CD8-positive, alpha-beta T cell (primary cell): ENCODE measurements at regions of chr14 and their contacts with region 1.

Region 1: DNA sequence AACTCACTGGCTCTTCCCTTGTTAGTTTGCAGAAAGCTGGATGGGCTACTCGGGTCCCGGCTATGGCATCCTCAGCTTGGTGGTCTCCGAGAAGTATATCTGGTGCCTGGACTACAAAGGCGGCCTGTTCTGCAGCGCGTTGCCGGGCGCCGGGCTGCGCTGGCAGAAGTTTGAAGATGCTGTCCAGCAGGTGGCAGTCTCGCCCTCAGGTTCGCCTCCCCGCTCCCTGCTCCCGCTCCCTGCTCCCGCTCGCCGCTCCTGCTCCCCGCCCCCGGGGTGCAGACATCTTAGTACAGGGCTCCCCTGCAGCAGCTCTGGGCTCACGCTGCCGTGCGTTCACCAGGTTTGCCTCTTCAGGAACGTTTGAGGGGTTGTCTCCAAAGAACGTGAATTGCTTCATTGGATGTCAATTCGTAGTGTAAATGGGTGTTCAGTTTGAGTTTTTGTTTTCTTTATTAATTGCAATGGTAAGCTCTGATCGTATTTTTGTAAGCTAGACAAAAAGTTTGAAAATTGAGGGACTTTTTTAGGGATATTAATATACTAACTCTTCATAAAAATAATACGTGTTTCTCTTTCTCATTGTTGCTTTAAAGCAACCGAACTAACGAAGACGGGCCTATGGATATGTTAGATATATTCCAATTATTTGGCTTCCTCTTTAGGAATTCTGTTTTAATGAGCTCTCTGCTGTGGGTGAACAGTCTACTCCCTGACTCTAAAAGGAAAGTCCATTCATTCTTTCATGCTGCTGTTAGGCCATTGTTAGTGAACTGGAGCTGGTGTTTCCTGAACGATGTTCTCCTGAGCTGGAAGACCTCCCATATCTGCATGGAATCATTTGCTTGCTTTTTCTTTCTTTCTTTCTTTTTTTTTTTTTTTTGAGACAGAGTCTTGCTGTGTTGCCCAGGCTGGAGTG is 71.3 kb downstream of the ANKRD9 start:
- DNase-seq: peak; percentile 8 to 84 (median 61)
- ATAC-seq: peak; percentile 48
- H3K4me3 ChIP-seq: no peak overlapping the region
- H3K4me3 Mint-ChIP-seq: no peak overlapping the region
- H3K27ac ChIP-seq: no peak overlapping the region
- H3K27ac Mint-ChIP-seq: no peak overlapping the region
- H3K4me1 ChIP-seq: peaks cover 3% of the 10 kb centered on the region
- H3K4me1 Mint-ChIP-seq: peaks cover 2% of the 10 kb centered on the region
- H3K27me3 ChIP-seq: no peaks in the 10 kb centered on the region
- H3K27me3 Mint-ChIP-seq: no peaks in the 10 kb centered on the region
- CTCF ChIP-seq: peak; percentile 74

Region 2: DNA sequence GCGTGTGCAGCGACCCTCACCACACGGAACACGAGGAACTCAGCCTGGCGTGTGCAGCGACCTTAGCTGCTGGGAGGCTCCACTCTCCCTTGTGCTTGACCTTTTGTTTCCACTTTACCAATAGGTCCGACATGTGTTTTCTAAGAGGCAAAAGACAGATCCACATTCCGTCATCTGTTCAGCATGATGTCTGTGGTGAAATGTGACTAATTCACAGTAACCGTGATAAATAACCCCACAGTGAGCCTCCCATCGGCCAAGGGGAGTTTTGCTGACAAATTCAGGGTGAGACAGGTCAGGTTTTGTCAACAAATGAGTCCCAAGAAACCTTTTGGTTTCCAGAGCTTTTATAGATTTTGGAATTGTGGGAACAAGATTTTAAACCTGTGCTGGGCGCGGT is 189.2 kb before region 1 on chr14:
- CTCF ChIA-PET with region 1: no interaction called
- POLR2A ChIA-PET with region 1: no interaction called
- intact Hi-C with region 1: no loop called
- DNase-seq: no peak
- ATAC-seq: no peak
- H3K4me3 ChIP-seq: no peak overlapping the region
- H3K4me3 Mint-ChIP-seq: no peak overlapping the region
- H3K27ac ChIP-seq: no peak overlapping the region
- H3K27ac Mint-ChIP-seq: no peak overlapping the region
- H3K4me1 ChIP-seq: no peaks in the 10 kb centered on the region
- H3K4me1 Mint-ChIP-seq: no peaks in the 10 kb centered on the region
- H3K27me3 ChIP-seq: no peaks in the 10 kb centered on the region
- H3K27me3 Mint-ChIP-seq: no peaks in the 10 kb centered on the region
- CTCF ChIP-seq: no peak

Region 3: DNA sequence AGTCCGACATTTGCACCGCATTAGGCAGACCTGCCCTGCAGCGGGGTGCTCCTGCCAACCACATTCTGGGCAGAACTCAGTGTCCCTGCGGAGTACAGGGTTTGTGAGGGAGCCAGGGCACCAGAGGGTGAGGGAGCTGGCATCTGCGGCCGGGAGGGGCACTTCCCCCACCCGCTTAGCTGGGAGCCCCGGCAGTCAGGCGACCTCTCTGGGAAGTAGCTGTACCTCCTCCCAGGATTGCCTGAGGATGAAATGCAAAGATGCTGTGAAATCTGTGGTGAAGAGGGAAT is 12.8 kb after region 1 on chr14:
- CTCF ChIA-PET with region 1: interaction called, 19 read pairs
- POLR2A ChIA-PET with region 1: no interaction called
- intact Hi-C with region 1: no loop called
- DNase-seq: no peak
- ATAC-seq: no peak
- H3K4me3 ChIP-seq: no peak overlapping the region
- H3K4me3 Mint-ChIP-seq: no peak overlapping the region
- H3K27ac ChIP-seq: no peak overlapping the region
- H3K27ac Mint-ChIP-seq: no peak overlapping the region
- H3K4me1 ChIP-seq: no peaks in the 10 kb centered on the region
- H3K4me1 Mint-ChIP-seq: no peaks in the 10 kb centered on the region
- H3K27me3 ChIP-seq: no peaks in the 10 kb centered on the region
- H3K27me3 Mint-ChIP-seq: no peaks in the 10 kb centered on the region
- CTCF ChIP-seq: no peak

Region 4: DNA sequence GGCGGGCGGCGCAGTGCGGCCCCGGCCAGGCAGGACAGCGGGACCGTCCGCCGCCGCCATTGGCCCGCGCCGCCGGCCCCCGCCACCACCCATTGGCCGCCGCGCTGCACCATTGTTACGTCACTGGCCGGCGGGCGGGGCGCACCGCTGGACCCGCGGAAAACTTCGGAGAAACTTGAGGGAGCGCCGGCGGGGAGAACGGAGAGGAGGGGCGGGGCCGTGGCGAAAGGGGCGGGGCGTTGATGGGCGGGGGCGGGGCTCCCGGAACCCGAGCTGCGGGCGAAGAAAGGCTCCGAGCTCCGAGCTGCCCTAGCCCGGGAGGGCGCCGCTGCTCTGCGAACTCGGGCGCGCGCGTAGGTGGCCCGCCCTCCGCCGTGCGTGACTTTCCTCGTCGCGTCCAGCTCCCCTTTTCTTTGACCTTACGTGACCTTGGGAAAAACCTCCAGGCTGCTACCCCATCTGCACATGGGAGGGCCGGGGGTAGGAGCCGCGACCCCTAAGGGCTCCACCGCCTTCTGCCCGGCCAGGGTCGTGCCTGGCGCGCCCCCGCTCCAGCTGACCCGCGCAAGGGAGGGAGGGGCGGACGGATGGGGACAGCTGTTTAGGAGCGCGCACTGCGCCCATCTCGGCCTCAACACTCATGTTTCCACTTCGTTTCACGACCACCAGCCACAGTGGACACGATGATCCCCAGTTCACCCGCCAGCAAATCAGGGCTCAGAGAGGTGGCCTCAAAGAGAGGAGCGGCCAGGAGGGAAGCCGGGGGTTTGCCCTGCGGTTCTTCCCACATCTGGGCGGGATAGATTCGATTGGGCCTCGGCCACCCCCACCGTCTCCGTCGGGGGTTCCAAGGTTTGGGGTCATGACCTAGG is 71.7 kb after region 1 on chr14 and contains the start of gene ANKRD9:
- CTCF ChIA-PET with region 1: interaction called, 74 read pairs
- POLR2A ChIA-PET with region 1: no interaction called
- intact Hi-C with region 1: no loop called
- DNase-seq: peak; percentile 57 to 91 (median 83)
- ATAC-seq: peak; percentile 86
- H3K4me3 ChIP-seq: peak within 1 kb of the TSS; percentile 78 to 96
- H3K4me3 Mint-ChIP-seq: peak within 1 kb of the TSS; percentile 86
- H3K27ac ChIP-seq: peak within 1 kb of the TSS; percentile 48 to 50
- H3K27ac Mint-ChIP-seq: peak within 1 kb of the TSS; percentile 64
- H3K4me1 ChIP-seq: peaks cover 16% of the 10 kb centered on the region
- H3K4me1 Mint-ChIP-seq: peaks cover 9% of the 10 kb centered on the region
- H3K27me3 ChIP-seq: no peaks in the 10 kb centered on the region
- H3K27me3 Mint-ChIP-seq: no peaks in the 10 kb centered on the region
- CTCF ChIP-seq: no peak
- total RNA-seq, gene ANKRD9: 4.7 to 5.0 TPM

Region 5: DNA sequence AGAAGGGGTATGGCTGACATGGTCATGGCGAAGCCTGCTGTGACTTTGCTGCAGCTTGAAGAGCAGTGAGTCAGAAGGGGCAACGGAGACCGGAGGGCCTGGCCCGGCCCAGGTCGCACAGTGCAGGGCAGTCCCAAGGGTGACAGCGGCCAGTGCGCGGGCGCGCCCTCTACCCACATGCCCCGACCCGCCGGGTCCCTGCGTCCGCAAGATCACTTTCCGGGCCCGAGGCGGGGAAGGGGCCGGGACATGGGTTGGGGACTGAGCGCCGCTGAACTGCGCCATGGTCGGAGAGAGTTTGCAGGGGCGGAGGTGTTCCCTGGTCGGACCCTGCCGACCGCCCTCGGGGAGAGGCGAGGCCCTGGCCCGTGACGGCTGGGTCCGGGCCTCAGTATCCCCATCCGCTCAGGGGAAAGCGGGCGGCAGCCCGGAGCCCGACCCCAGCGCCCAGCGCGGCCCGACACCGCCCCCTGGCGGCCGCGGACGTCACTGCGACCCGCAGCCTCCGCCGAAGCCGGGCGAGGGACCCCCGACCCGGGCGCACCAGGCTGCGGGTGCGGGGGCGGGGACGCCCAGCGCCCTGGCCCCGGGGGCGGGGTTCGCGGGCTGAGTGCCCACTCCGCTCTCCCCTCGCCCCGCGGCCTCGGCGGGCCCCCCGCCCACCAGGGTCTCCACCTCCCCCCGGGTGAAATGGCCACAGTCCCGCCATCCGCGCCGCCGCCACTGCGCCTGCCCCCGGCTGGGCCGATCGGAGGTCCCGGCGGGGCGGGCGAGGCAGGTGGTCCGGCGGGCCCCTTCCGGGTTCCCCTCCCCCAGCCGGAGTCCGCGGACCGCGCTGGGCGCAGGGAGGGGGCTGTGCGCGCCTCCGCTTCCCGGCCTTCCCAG is 78.5 kb after region 1 on chr14:
- CTCF ChIA-PET with region 1: interaction called, 74 read pairs
- POLR2A ChIA-PET with region 1: interaction called, 4 read pairs
- intact Hi-C with region 1: loop called in 1 of 2 experiments (anchors 1 kb)
- DNase-seq: peak; percentile 33 to 81 (median 60)
- ATAC-seq: peak; percentile 93
- H3K4me3 ChIP-seq: peak overlapping the region; percentile 51
- H3K4me3 Mint-ChIP-seq: peak overlapping the region; percentile 83
- H3K27ac ChIP-seq: no peak overlapping the region
- H3K27ac Mint-ChIP-seq: no peak overlapping the region
- H3K4me1 ChIP-seq: peaks cover 5% of the 10 kb centered on the region
- H3K4me1 Mint-ChIP-seq: peaks cover 5% of the 10 kb centered on the region
- H3K27me3 ChIP-seq: peaks cover 0 to 3% of the 10 kb centered on the region in 2 experiments
- H3K27me3 Mint-ChIP-seq: peaks cover 4% of the 10 kb centered on the region
- CTCF ChIP-seq: peak; percentile 85

Region 6: GRCh38 chr14:102524466-102525218 is 86.4 kb after region 1 on chr14:
- CTCF ChIA-PET with region 1: interaction called, 51 read pairs
- POLR2A ChIA-PET with region 1: interaction called, 4 read pairs
- intact Hi-C with region 1: no loop called
- DNase-seq: peak; percentile 81 to 97 (median 90)
- ATAC-seq: peak; percentile 79
- H3K4me3 ChIP-seq: peak overlapping the region; percentile 69 to 84
- H3K4me3 Mint-ChIP-seq: peak overlapping the region; percentile 85
- H3K27ac ChIP-seq: peak overlapping the region; percentile 35 to 83
- H3K27ac Mint-ChIP-seq: peak overlapping the region; percentile 61
- H3K4me1 ChIP-seq: peaks cover 20% of the 10 kb centered on the region
- H3K4me1 Mint-ChIP-seq: peaks cover 26% of the 10 kb centered on the region
- H3K27me3 ChIP-seq: no peaks in the 10 kb centered on the region
- H3K27me3 Mint-ChIP-seq: no peaks in the 10 kb centered on the region
- CTCF ChIP-seq: peak; percentile 96